A549 (cell line): ENCODE measurements at regions of chr7 and their contacts with region 1.

Region 1: GRCh38 chr7:31134246-31135188 is 82.4 kb downstream of the ADCYAP1R1 start:
- DNase-seq: peak; percentile 67 to 76
- ATAC-seq: peak; percentile 98 to 100
- H3K4me3 ChIP-seq: no peak overlapping the region
- H3K27ac ChIP-seq: no peak overlapping the region
- H3K4me1 ChIP-seq: no peaks in the 10 kb centered on the region
- CTCF ChIP-seq: peak; percentile 79
- EP300 ChIP-seq: no peak
- POLR2A ChIP-seq: no peak
- RAD21 ChIP-seq: peak; percentile 78 to 82

Region 2: DNA sequence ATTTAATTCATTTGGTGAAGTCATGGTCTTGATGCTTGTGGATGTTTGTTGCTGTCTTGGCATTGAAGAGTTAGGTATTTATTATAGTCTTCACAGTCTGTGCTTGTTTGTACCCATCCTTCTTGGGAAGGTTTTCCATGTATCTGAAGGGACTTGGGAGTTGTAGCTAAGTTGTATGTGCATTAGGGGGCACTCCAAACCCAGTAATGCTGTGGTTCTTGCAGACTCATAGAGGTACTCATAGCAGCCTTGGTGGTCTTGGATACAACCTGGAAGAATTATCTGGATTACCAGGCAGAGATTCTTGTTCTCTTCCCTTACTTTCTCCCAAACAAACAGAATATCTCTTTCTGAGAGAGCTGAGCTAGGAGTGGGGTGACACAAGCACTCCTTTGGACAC is 10.8 kb after region 1 on chr7:
- CTCF ChIA-PET with region 1: interaction called, 15 read pairs
- POLR2A ChIA-PET with region 1: no interaction called
- DNase-seq: peak in 1 of 2 experiments; percentile 23
- ATAC-seq: no peak
- H3K4me3 ChIP-seq: no peak overlapping the region
- H3K27ac ChIP-seq: no peak overlapping the region
- H3K4me1 ChIP-seq: no peaks in the 10 kb centered on the region
- CTCF ChIP-seq: no peak
- EP300 ChIP-seq: no peak
- POLR2A ChIP-seq: no peak
- RAD21 ChIP-seq: peak in 1 of 2 experiments; percentile 38; a peak in 1 of 5 replicates

Region 3: GRCh38 chr7:31488562-31489203 is 354.2 kb after region 1 on chr7:
- CTCF ChIA-PET with region 1: interaction called, 12 read pairs
- POLR2A ChIA-PET with region 1: no interaction called
- DNase-seq: peak; percentile 65 to 69
- ATAC-seq: peak; percentile 98 to 100
- H3K4me3 ChIP-seq: no peak overlapping the region
- H3K27ac ChIP-seq: no peak overlapping the region
- H3K4me1 ChIP-seq: no peaks in the 10 kb centered on the region
- CTCF ChIP-seq: peak; percentile 83
- EP300 ChIP-seq: no peak
- POLR2A ChIP-seq: no peak
- RAD21 ChIP-seq: peak; percentile 89 to 92

Region 4: DNA sequence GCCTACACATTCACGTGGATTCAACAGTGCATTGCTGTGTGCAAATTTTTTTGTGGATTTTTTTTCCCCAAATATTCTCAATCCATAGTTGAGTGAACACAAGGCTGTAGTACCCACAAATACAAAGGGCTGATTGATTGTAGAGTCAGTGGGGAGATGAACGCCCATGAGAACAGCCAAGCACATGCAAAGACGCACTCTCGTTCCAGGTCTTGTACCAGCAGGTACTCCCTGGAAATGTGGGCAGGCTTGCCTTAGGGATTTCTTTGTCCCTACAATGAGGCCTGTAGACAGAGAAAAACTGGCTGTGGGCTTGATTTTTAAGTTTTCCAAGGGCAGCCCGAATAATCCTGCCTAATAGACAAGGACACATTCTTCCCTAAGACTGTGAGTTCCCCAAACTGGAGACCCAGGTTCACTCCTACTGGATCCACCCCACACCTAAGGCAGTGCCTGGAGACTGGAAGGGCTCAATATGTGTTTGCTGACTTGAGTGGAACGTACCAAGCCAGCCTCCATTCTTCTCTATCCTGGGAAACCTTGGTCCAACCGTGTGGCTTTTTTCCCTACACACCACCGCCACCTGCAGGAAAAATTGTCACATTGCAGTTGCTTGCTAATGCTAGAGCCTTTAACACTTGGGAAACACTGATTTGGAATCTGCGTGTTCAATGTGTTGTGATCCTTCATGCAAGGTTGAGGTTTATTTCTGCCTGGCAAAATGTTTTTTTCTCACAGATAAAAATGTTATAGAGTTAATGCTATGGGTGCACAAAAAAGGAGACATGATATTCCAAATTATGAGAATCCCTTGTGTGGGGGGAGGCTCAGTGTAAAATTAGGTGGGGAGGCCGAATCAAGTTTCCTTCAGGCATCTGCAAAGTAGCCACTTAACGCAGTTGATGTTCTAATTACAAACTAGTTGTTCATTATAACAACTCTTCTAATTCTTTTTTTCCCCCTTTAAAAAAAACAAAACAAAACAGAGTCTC is 601.8 kb after region 1 on chr7:
- CTCF ChIA-PET with region 1: interaction called, 20 read pairs
- POLR2A ChIA-PET with region 1: no interaction called
- DNase-seq: peak; percentile 45 to 64
- ATAC-seq: peak; percentile 80 to 95
- H3K4me3 ChIP-seq: no peak overlapping the region
- H3K27ac ChIP-seq: no peak overlapping the region
- H3K4me1 ChIP-seq: no peaks in the 10 kb centered on the region
- CTCF ChIP-seq: peak; percentile 78
- EP300 ChIP-seq: no peak
- POLR2A ChIP-seq: no peak
- RAD21 ChIP-seq: peak; percentile 81 to 93